Caki2 (cell line): ENCODE measurements at regions of chr17 and their contacts with region 1.

Region 1: DNA sequence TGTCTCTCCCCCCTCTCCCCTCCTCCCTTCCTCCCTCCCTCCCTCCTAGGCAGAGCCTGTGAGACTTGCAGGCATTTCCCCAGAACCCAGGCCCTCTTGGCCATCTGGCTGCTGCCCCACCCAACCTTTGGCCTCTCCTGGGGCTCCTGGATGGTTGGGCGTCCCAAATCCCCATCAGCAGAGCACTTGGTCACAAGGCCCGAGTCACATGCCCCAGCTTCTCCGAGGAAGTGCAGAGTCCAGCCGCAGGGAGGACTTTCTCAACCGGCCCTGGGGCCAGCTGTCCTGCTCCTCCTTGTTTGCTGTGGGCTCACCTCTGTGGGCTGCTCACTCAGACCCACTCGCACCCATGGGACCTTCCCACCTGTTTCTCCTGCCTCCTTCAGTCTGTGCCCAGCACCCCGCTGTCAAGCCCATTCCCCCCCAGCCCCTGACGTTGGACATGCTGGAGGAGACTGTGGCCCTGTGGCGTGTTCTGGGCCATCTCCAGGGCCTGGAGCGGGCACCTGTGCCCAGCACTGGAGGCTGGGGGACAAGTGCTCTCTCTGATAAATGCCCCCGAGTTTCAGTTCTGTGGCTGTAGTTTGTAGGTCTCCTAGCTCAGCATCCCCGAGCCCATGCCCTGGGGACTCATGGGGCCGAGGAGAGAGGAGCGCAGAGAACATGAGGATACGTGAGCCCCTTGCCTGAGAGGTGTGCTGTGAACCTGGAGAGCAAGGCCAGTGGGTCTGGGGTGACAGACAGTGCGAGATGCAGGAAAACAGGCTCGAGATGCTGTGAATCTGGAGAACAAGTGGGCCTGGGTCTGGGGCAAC is 42.3 kb upstream of the ZNF750 start:
- DNase-seq: no peak

Region 2: DNA sequence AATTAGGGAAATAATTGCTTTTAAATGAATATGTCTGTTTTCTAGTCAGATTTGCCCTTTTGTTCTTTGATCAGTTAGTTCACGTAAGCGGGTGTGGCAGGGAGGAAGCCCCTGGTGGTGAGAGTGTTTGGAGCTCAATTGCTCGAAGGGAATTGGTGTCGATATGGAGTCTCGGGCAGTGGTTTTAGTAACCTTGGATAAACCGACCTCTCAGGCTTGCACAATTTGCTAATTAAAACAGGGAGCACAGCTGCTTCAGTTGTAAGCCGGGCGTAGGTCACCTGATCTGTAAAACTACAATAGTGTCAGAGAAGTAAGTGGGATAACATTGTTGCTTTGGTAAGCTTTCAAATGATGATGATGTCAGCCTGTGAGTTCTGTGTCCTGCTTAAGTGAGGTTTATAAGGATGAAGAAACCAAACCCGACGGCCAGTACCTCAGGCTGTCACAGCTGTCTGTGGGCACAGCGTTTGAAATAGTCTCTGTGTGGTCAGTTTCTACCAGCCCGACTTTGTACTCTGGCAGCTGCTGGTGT is 45.2 kb before region 1 on chr17:
- in situ Hi-C with region 1: loop called (anchors 10 kb)
- DNase-seq: no peak